T-cell (primary cell): ENCODE measurements at regions of chr1 and their contacts with region 1.

Region 1: DNA sequence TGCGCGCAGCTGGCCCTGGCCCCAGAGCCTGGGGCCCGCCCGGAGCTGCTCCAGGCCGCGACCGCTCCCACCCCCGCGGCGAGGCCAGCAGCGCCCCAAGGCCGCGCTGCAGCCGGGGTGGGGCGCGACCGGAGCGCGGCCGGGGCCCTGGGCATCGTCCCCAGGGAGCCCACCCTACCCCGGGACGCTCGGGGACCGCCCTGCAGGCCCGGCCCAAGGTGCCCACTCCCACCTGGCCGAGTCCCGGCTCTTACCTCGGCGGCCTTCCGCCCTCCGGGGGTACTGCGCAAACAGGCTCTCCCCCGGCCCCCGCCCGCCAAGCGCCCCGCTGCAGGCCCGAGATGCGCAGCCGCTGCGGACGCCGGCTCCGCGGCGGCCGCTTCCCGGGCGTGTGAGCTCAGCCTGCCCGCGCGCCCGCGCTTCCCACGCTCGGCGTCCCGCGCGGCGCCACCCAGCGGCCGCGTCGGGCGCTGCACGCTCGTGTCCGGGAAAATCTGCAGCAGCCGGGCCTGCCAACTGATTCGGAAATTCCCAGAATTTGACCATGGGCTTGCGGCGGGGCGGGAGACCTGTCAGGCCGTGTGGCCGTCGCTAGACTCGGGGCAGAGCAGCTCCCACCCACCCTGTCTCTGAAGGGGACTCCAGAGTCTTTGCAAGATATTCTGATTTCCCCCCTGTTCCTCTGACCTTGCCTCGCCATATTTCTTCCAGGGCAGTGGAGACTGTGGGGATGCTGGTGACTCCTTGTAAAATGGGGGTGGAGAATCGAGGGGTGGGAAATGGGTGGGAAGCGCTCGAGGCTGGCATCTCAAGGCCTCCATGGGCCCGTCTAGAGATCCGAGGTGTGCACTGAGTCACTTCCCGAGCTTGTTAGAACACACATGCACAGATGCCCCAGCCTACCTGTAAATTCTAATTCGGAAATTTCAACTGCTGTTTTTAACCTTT is 41.9 kb downstream of the CD34 start:
- DNase-seq: peak; percentile 31 to 90 (median 59)
- ATAC-seq: peak; percentile 64 to 79 (median 70)
- H3K4me3 ChIP-seq: peak overlapping the region; percentile 91
- H3K4me3 Mint-ChIP-seq: peak overlapping the region; percentile 91 to 97 (median 93)
- H3K27ac ChIP-seq: peak overlapping the region; percentile 91
- H3K27ac Mint-ChIP-seq: peak overlapping the region; percentile 92 to 95
- H3K4me1 ChIP-seq: peaks cover 24 to 79% of the 10 kb centered on the region in 2 experiments
- H3K4me1 Mint-ChIP-seq: peaks cover 82 to 89% (median 86%) of the 10 kb centered on the region in 3 donors
- H3K27me3 ChIP-seq: no peaks in the 10 kb centered on the region
- H3K27me3 Mint-ChIP-seq: no peaks in the 10 kb centered on the region

Region 2: GRCh38 chr1:207454046-207454964 is 414.7 kb before region 1 on chr1 and contains the start of gene CR2:
- CTCF ChIA-PET with region 1: no interaction called
- POLR2A ChIA-PET with region 1: no interaction called
- DNase-seq: peak in 32 of 35 experiments; percentile 8 to 55 (median 28)
- ATAC-seq: peak; percentile 63 to 74 (median 71)
- H3K4me3 ChIP-seq: peak within 1 kb of the TSS; percentile 55 to 76
- H3K4me3 Mint-ChIP-seq: peak within 1 kb of the TSS in 2 of 3 donors; percentile 70 to 72
- H3K27ac ChIP-seq: no peak within 1 kb of the TSS
- H3K27ac Mint-ChIP-seq: peak within 1 kb of the TSS; percentile 9 to 59
- H3K4me1 ChIP-seq: peaks cover 13 to 36% of the 10 kb centered on the region in 2 experiments
- H3K4me1 Mint-ChIP-seq: peaks cover 2 to 16% (median 16%) of the 10 kb centered on the region in 3 donors
- H3K27me3 ChIP-seq: peaks cover 0 to 14% of the 10 kb centered on the region in 2 experiments
- H3K27me3 Mint-ChIP-seq: peaks cover 11 to 30% of the 10 kb centered on the region in 2 donors
- total RNA-seq, gene CR2: 1.4 to 4.6 (median 2.1) TPM

Region 3: GRCh38 chr1:207833956-207834660 is 34.9 kb before region 1 on chr1:
- CTCF ChIA-PET with region 1: interaction called, 22 to 48 read pairs
- POLR2A ChIA-PET with region 1: interaction called, 5 to 7 read pairs
- DNase-seq: no peak
- ATAC-seq: peak in 1 of 4 experiments; percentile 10
- H3K4me3 ChIP-seq: no peak overlapping the region
- H3K4me3 Mint-ChIP-seq: peak overlapping the region in 1 of 3 donors; percentile 67
- H3K27ac ChIP-seq: peak overlapping the region; percentile 10
- H3K27ac Mint-ChIP-seq: peak overlapping the region; percentile 97 to 99
- H3K4me1 ChIP-seq: peaks cover 12 to 71% of the 10 kb centered on the region in 2 experiments
- H3K4me1 Mint-ChIP-seq: peaks cover 97 to 100% (median 99%) of the 10 kb centered on the region in 3 donors
- H3K27me3 ChIP-seq: no peaks in the 10 kb centered on the region
- H3K27me3 Mint-ChIP-seq: no peaks in the 10 kb centered on the region

Region 4: GRCh38 chr1:208303743-208304712 is 435.0 kb after region 1 on chr1:
- CTCF ChIA-PET with region 1: no interaction called
- POLR2A ChIA-PET with region 1: no interaction called
- DNase-seq: no peak
- ATAC-seq: no peak
- H3K4me3 ChIP-seq: no peak overlapping the region
- H3K4me3 Mint-ChIP-seq: no peak overlapping the region
- H3K27ac ChIP-seq: no peak overlapping the region
- H3K27ac Mint-ChIP-seq: no peak overlapping the region
- H3K4me1 ChIP-seq: no peaks in the 10 kb centered on the region
- H3K4me1 Mint-ChIP-seq: no peaks in the 10 kb centered on the region
- H3K27me3 ChIP-seq: no peaks in the 10 kb centered on the region
- H3K27me3 Mint-ChIP-seq: peaks cover 14 to 20% of the 10 kb centered on the region in 2 donors

Region 5: GRCh38 chr1:208731981-208732821 is 863.2 kb after region 1 on chr1:
- CTCF ChIA-PET with region 1: no interaction called
- POLR2A ChIA-PET with region 1: no interaction called
- DNase-seq: no peak
- ATAC-seq: no peak
- H3K4me3 ChIP-seq: no peak overlapping the region
- H3K4me3 Mint-ChIP-seq: peak overlapping the region in 1 of 3 donors; percentile 2
- H3K27ac ChIP-seq: no peak overlapping the region
- H3K27ac Mint-ChIP-seq: no peak overlapping the region
- H3K4me1 ChIP-seq: no peaks in the 10 kb centered on the region
- H3K4me1 Mint-ChIP-seq: peaks cover 0 to 12% (median 6%) of the 10 kb centered on the region in 3 donors
- H3K27me3 ChIP-seq: no peaks in the 10 kb centered on the region
- H3K27me3 Mint-ChIP-seq: no peaks in the 10 kb centered on the region